Dorsolateral prefrontal cortex (tissue), 120 donors: ENCODE measurements at regions of chr22 and their contacts with region 1.

Region 1: GRCh38 chr22:40645579-40646197 is 9.2 kb upstream of the MRTFA start:
- DNase-seq: no peak
- H3K4me3 ChIP-seq: peak overlapping the region in 1 of 59 donors; percentile 29
- H3K27ac ChIP-seq: peak overlapping the region in 19 of 59 donors; percentile 4 to 69 (median 55)
- H3K27me3 ChIP-seq: no peaks in the 10 kb centered on the region
- CTCF ChIP-seq: no peak

Region 2: DNA sequence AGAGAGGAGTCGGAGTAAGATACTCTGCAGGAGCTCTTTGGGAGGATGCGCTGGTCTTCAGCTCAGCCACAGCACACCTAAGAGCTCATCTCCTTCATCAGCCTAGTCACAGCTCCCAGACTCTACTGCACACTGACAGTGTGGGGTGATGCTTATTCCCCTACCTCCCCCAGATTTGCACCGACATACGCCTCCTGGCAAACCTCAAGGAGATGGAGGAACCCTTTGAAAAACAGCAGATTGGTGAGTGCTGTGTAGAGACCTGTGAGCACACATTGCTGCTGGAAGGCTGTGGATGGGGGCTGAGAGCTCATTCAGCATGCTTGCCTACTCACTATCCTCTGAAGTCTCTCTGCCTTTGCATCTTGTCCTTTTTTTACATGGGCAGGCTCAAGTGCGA is 284.6 kb before region 1 on chr22:
- intact Hi-C with region 1: no loop called
- DNase-seq: peak in 2 of 10 donors; percentile 16 to 34
- H3K4me3 ChIP-seq: no peak overlapping the region
- H3K27ac ChIP-seq: peak overlapping the region in 3 of 59 donors; percentile 7 to 34 (median 26)
- H3K27me3 ChIP-seq: no peaks in the 10 kb centered on the region
- CTCF ChIP-seq: no peak

Region 3: DNA sequence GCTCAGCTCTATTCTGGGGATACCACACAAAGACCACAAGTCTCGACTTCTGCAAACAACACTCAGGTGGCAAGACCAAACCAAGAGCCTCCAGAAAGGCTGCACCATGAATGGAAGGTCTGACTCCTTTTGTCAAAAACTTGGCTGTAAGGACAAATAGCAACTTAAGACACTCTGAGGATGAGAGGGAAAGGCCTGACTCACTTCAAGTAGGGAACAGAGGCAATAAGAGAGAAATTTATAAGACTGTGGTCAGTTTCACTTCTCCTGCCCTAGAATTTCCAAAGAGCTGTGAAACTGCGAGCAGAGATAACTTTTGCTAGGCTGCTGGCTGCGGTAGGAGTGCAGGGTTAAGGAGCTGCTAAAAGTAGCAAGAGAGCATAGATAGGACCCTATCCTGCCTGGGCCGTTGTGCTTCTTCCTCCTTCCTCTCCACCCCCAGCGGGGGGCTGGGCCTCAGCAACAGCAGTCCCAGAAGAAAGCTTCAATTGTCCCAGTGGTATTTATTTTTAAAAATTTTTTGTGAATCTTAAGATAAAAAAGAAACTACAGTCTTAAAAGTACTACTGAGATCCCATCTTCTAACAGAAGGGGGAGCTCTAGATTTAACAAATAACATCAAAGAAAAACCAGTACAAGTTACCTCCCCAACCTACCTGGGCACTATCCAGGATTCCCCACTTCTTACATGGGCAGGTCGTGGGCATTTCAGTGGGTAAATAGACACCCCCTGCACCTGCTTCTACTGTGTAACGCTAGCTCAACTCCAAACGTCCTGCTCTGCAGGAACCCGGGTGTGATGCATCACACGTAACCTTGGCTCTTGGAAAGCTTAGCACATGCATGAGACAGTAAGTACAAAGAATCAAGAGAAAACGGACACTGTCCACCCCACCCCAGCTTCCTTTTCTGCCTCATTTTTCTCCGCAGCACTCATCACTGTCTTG is 208.9 kb before region 1 on chr22:
- intact Hi-C with region 1: loop called (anchors 2 to 5 kb)
- DNase-seq: no peak
- H3K4me3 ChIP-seq: peak overlapping the region in 46 of 59 donors; percentile 0 to 56 (median 24)
- H3K27ac ChIP-seq: peak overlapping the region in 51 of 59 donors; percentile 1 to 81 (median 54)
- H3K27me3 ChIP-seq: no peaks in the 10 kb centered on the region
- CTCF ChIP-seq: peak; percentile 60 to 86 (median 78)

Region 4: GRCh38 chr22:40525249-40525884 is 120.3 kb before region 1 on chr22:
- intact Hi-C with region 1: loop called in 1 of 2 experiments (anchors 2 kb)
- DNase-seq: peak in 6 of 10 donors; percentile 18 to 47 (median 32)
- H3K4me3 ChIP-seq: no peak overlapping the region
- H3K27ac ChIP-seq: no peak overlapping the region
- H3K27me3 ChIP-seq: no peaks in the 10 kb centered on the region
- CTCF ChIP-seq: peak; percentile 41 to 88 (median 76)